ENCODE measurements at regions of chr1 and their contacts with region 1.

Region 1: DNA sequence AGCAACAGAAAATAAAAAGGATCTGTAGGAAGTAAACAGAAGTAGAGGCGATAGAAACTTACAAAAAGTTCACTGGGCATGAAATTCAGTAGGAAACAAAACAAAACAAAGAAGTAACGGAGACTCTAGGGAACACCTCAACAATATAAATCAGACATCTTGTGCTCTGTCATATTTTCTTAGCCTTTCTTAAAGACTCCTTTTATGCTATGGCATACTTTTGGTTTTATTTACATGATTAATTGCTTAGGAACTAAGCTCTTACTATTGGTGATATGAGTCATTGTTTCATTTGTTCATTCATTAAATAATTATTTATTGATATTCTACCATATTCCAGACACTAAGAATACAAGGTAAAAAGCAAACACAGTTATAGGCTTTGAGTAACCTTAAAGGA is 126.6 kb downstream of the KCNT2 start:
- DNase-seq: peak; percentile 33
- ATAC-seq: peak; percentile 85
- H3K4me3 ChIP-seq: peak overlapping the region; percentile 40; the same call in 1 of the 2 replicates
- H3K27ac ChIP-seq: peak overlapping the region; percentile 34
- H3K4me1 ChIP-seq: peaks cover 11% of the 10 kb centered on the region
- H3K27me3 ChIP-seq: no peaks in the 10 kb centered on the region
- CTCF ChIP-seq: no peak

Region 2: GRCh38 chr1:196466654-196467053 is 15.0 kb before region 1 on chr1:
- CTCF ChIA-PET with region 1: no interaction called
- POLR2A ChIA-PET with region 1: no interaction called
- intact Hi-C with region 1: loop called (anchors 2 kb)
- DNase-seq: peak; percentile 56
- ATAC-seq: peak; percentile 81
- H3K4me3 ChIP-seq: no peak overlapping the region
- H3K27ac ChIP-seq: peak overlapping the region; percentile 44
- H3K4me1 ChIP-seq: peaks cover 31% of the 10 kb centered on the region
- H3K27me3 ChIP-seq: no peaks in the 10 kb centered on the region
- CTCF ChIP-seq: no peak

Region 3: DNA sequence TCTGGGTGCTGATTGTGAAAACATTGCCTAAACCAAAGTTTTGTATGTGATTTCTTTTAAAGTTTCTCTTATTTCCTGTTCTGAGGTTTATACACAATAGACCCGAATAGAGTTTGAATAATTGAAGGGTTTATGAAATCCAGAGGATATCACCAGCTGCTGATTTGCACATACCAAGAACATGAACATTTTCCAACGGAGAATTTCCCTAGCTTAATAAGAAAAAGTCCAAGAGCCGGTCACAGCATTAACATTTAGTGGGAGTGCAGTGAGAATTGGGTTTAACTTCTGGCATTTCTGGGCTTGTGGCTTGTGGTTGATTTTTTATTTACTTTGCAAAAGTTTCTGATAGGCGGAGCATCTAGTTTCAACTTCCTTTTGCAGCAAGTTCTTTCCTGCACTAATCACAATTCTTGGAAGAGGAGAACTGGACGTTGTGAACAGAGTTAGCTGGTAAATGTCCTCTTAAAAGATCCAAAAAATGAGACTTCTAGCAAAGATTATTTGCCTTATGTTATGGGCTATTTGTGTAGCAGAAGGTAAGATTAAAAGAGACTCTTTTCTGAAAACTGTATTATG is 170.1 kb after region 1 on chr1 and contains the start of gene CFH:
- CTCF ChIA-PET with region 1: no interaction called
- POLR2A ChIA-PET with region 1: no interaction called
- intact Hi-C with region 1: loop called (anchors 5 kb)
- DNase-seq: peak; percentile 33
- ATAC-seq: peak; percentile 79
- H3K4me3 ChIP-seq: peak within 1 kb of the TSS; percentile 11
- H3K27ac ChIP-seq: no peak within 1 kb of the TSS
- H3K4me1 ChIP-seq: peaks cover 7% of the 10 kb centered on the region; the same call in 1 of the 2 replicates
- H3K27me3 ChIP-seq: no peaks in the 10 kb centered on the region
- CTCF ChIP-seq: no peak
- total RNA-seq, gene CFH: 0.80 and 1.9 TPM in 2 replicates

Measured in PC-3 (cell line).